ENCODE measurements at regions of chr15 and their contacts with region 1.

Region 1: DNA sequence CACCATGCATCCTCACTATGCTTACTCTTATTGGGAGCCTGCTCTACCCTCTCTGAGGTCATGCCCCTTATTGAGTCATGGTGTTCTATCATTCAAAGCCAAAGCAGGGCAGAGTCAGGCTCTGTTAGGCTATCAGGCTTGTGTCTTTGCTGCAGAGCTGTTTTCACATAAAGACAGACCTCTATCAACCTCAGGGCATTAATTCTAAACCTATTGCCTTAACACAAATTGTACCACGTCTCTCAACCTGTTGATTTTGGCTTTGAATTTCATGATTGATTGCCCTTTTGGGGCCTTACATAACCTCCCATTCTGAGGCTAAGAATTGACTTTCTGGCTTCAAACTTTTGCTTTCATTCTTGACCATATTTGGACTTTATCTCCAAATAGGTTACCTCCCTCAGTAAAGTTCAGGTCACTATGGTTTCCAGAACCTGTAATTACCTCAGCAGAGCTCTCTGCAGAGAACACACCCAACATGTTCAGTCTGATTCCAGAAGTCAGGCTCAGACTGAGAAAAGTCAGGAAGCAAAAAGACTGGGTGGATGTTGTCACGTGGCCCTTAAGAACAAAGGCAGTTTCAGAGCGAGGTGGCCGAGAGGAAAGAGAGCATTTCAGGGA is 221.4 kb upstream of the NANOGP8 start:
- DNase-seq: peak; percentile 68
- H3K4me3 ChIP-seq: no peak overlapping the region
- H3K27ac ChIP-seq: peak overlapping the region; percentile 29
- H3K4me1 ChIP-seq: peaks cover 23% of the 10 kb centered on the region
- H3K27me3 ChIP-seq: no peaks in the 10 kb centered on the region
- CTCF ChIP-seq: no peak

Region 2: DNA sequence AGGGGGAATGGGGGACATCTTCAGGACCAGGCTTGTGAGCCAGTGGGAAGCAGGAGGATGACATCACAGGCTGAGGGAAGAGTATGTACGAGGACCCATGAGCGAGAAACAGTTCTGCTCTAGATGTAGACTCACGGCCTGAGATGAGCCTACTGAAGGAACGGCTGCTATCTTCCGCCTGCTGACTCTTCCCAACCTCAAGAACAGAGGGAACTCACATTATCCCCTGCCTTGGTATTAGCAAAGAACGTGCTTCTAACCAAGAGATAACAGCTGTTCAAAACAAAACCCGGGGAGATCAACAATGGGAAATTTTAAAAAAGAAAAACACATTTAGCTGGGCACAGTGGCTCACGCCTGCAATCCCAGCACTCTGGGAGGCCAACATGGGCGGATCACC is 1292.7 kb before region 1 on chr15:
- CTCF ChIA-PET with region 1: interaction called, 21 read pairs
- dilution Hi-C with region 1: no loop called
- in situ Hi-C with region 1: no loop called
- intact Hi-C with region 1: no loop called
- DNase-seq: no peak
- H3K4me3 ChIP-seq: no peak overlapping the region
- H3K27ac ChIP-seq: no peak overlapping the region
- H3K4me1 ChIP-seq: no peaks in the 10 kb centered on the region
- H3K27me3 ChIP-seq: no peaks in the 10 kb centered on the region
- CTCF ChIP-seq: no peak

Region 3: DNA sequence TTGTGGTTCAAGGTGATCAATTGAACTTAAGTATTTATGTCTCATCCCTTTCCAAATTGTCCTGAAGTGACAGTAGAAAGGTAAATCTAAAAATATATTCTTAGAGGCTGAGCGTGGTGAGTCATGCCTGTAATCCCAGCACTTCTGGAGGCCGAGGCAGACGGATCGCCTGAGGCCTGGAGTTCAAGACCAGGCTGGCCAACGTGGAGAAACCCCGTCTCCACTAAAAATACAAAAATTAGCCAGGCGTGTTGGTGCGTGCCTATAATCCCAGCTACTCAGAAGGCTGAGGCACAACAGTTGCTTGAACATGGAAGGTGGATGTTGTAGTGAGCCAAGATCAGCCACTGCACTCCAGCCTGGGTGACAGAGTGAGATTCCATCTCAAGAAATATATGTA is 12.9 kb after region 1 on chr15:
- CTCF ChIA-PET with region 1: no interaction called
- dilution Hi-C with region 1: no loop called
- in situ Hi-C with region 1: no loop called
- intact Hi-C with region 1: loop called (anchors 1 kb)
- DNase-seq: peak; percentile 80
- H3K4me3 ChIP-seq: no peak overlapping the region
- H3K27ac ChIP-seq: no peak overlapping the region
- H3K4me1 ChIP-seq: peaks cover 10% of the 10 kb centered on the region
- H3K27me3 ChIP-seq: no peaks in the 10 kb centered on the region
- CTCF ChIP-seq: no peak

Measured in mammary epithelial cell (primary cell).